WTC11 (cell line): ENCODE measurements at regions of chr1 and their contacts with region 1.

Region 1: DNA sequence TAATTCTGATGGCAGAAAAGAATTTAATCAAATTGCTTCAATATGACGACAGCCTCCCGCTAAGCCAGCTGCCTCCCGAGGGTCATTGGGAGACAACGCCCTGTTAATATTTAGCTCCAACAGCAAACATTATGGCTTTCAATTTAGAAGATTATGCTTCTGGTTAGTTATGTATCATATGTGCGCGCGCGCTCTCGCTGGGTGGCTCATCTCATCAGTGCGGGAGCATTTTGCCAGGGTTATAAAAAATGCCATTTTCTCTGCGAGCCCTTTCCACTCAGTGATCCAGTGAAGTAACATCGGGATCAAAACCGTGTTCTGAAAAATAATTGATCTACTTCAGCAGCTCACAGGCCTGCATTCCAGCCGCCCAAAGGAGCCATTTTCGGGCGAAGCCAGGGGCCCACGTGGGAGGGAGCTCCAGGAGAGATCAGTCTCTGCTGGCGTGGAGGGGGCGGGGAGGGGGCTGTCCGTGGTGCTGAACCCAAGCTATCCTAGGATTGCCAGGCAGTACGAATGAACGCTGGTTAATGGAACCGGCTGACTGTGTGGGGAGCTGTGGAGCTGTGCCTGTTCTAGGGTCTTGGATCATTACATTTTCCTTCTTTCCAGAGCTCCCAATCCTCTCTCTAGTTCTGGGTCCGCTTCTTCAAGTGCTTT is 219.1 kb upstream of the ZC3H12A start:
- DNase-seq: peak; percentile 92
- ATAC-seq: peak; percentile 95
- H3K4me3 Mint-ChIP-seq: peak overlapping the region; percentile 54
- H3K27ac Mint-ChIP-seq: no peak overlapping the region
- H3K4me1 Mint-ChIP-seq: peaks cover 42% of the 10 kb centered on the region
- H3K27me3 Mint-ChIP-seq: peaks cover 8% of the 10 kb centered on the region; the same call in 1 of the 2 replicates
- CTCF ChIP-seq: no peak

Region 2: DNA sequence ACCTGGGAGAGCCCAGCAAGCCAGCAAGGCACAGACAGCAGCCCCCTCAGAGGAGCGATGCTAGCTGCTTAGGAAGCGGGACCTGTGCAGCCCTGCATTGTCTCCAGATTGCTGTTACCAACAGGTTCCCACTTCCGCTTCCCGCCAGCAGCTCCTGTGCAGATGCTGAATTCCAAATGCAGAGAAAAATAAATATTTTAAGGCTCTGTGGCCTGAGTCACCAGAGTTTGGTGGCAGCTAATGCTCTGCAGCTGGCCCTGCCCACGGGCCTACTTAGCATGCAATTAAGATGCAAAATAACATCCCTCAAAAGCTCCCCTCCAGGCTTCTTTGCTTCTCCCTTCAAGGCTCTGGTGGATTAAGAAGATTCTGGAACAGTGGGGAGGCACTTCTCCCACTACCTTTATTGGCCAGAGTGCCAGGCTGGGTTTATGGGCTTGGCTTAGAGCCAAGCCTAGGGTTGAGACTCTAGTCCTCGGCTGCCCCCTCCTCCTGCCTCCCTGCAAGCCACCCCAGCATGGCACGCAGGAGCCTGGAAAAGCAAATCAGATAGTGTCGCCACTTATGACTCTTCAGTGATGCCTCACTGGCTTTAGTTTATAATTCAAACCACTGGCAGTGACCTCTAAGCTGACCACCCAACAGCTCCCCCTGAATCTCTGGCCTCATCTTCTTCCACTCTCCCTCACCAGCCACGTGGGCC is 12.0 kb after region 1 on chr1:
- CTCF ChIA-PET with region 1: interaction called, 14 read pairs
- POLR2A ChIA-PET with region 1: no interaction called
- DNase-seq: no peak
- ATAC-seq: peak; percentile 66
- H3K4me3 Mint-ChIP-seq: no peak overlapping the region
- H3K27ac Mint-ChIP-seq: no peak overlapping the region
- H3K4me1 Mint-ChIP-seq: peaks cover 39% of the 10 kb centered on the region
- H3K27me3 Mint-ChIP-seq: no peaks in the 10 kb centered on the region
- CTCF ChIP-seq: no peak

Region 3: GRCh38 chr1:37315371-37315846 is 60.1 kb after region 1 on chr1:
- CTCF ChIA-PET with region 1: interaction called, 17 read pairs
- POLR2A ChIA-PET with region 1: interaction called, 3 read pairs
- DNase-seq: peak; percentile 36
- ATAC-seq: peak; percentile 73
- H3K4me3 Mint-ChIP-seq: peak overlapping the region; percentile 42
- H3K27ac Mint-ChIP-seq: peak overlapping the region; percentile 78
- H3K4me1 Mint-ChIP-seq: peaks cover 62% of the 10 kb centered on the region
- H3K27me3 Mint-ChIP-seq: peaks cover 29% of the 10 kb centered on the region
- CTCF ChIP-seq: no peak

Region 4: GRCh38 chr1:37323486-37324377 is 68.5 kb after region 1 on chr1:
- CTCF ChIA-PET with region 1: interaction called, 21 read pairs
- POLR2A ChIA-PET with region 1: no interaction called
- DNase-seq: peak; percentile 77
- ATAC-seq: peak; percentile 51
- H3K4me3 Mint-ChIP-seq: no peak overlapping the region
- H3K27ac Mint-ChIP-seq: no peak overlapping the region; the same call in 1 of the 2 replicates
- H3K4me1 Mint-ChIP-seq: peaks cover 22% of the 10 kb centered on the region
- H3K27me3 Mint-ChIP-seq: no peaks in the 10 kb centered on the region; the same call in 1 of the 2 replicates
- CTCF ChIP-seq: peak; percentile 91

Region 5: DNA sequence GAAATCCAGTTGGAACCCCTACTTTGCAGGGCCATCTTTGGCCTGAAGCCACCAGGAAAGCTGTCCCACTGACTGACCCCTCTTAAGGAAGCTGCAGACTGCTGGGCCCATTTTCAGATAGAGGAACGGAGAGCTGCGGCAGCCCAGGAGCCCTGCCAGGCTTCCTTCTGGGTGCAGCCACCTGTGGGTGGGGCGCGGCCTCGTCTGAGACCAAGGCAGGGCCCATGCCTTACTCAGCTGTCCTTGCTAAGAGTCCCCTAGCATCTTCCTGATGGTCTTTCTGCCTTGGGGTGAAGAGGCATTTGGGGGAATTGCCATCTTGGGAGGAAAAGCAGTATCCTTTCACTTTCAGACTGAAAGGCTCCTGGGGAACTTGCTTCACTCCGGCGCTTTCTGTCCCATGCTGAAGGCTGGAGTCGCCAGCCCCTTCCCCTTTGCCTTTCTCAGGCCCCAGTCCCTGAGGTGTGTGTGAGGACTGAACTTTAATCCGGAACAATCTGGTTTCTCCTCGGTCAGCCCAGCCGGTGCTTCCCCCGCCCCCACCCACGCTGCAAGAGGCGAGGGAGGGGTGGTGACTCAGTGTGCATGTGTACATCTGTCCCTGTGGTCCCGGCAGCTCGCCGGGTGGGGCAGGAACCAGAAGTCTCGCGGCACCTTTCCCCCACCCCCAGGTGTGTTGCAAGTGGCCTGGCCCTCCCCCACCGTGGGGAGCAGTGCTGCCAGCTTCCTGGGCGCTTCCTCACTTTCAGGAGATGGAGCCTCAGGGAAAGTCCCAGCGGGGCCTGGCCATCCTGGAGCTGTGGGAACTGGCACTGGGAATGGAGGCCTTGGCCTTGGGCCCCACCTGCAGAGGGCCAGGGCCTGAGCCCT is 224.2 kb after region 1 on chr1:
- CTCF ChIA-PET with region 1: no interaction called
- POLR2A ChIA-PET with region 1: no interaction called
- DNase-seq: no peak
- ATAC-seq: no peak
- H3K4me3 Mint-ChIP-seq: no peak overlapping the region
- H3K27ac Mint-ChIP-seq: peak overlapping the region; percentile 65
- H3K4me1 Mint-ChIP-seq: peaks cover 40% of the 10 kb centered on the region
- H3K27me3 Mint-ChIP-seq: no peaks in the 10 kb centered on the region
- CTCF ChIP-seq: no peak